CD4-positive, alpha-beta T cell (primary cell): ENCODE measurements at regions of chr12 and their contacts with region 1.

Region 1: GRCh38 chr12:46153268-46153872 is 115.5 kb downstream of the SLC38A1 start:
- DNase-seq: peak in 3 of 14 experiments; percentile 51 to 58 (median 57)
- ATAC-seq: no peak
- H3K4me3 ChIP-seq: no peak overlapping the region
- H3K4me3 Mint-ChIP-seq: no peak overlapping the region
- H3K27ac ChIP-seq: no peak overlapping the region
- H3K27ac Mint-ChIP-seq: no peak overlapping the region
- H3K4me1 ChIP-seq: no peaks in the 10 kb centered on the region
- H3K4me1 Mint-ChIP-seq: peaks cover 18% of the 10 kb centered on the region
- H3K27me3 ChIP-seq: no peaks in the 10 kb centered on the region
- H3K27me3 Mint-ChIP-seq: peaks cover 10% of the 10 kb centered on the region
- CTCF ChIP-seq: peak; percentile 90

Region 2: GRCh38 chr12:45863332-45863731 is 290.0 kb before region 1 on chr12:
- CTCF ChIA-PET with region 1: no interaction called
- POLR2A ChIA-PET with region 1: no interaction called
- intact Hi-C with region 1: no loop called
- DNase-seq: no peak
- ATAC-seq: no peak
- H3K4me3 ChIP-seq: no peak overlapping the region
- H3K4me3 Mint-ChIP-seq: no peak overlapping the region
- H3K27ac ChIP-seq: no peak overlapping the region
- H3K27ac Mint-ChIP-seq: no peak overlapping the region
- H3K4me1 ChIP-seq: no peaks in the 10 kb centered on the region
- H3K4me1 Mint-ChIP-seq: peaks cover 12% of the 10 kb centered on the region
- H3K27me3 ChIP-seq: no peaks in the 10 kb centered on the region
- H3K27me3 Mint-ChIP-seq: no peaks in the 10 kb centered on the region
- CTCF ChIP-seq: no peak

Region 3: GRCh38 chr12:46209914-46210872 is 56.8 kb after region 1 on chr12:
- CTCF ChIA-PET with region 1: no interaction called
- POLR2A ChIA-PET with region 1: no interaction called
- intact Hi-C with region 1: loop called in 1 of 2 experiments (anchors 5 kb)
- DNase-seq: peak in 13 of 14 experiments; percentile 30 to 82 (median 60)
- ATAC-seq: peak; percentile 68
- H3K4me3 ChIP-seq: no peak overlapping the region
- H3K4me3 Mint-ChIP-seq: peak overlapping the region; percentile 36
- H3K27ac ChIP-seq: peak overlapping the region; percentile 69 to 82
- H3K27ac Mint-ChIP-seq: peak overlapping the region; percentile 96
- H3K4me1 ChIP-seq: peaks cover 45% of the 10 kb centered on the region
- H3K4me1 Mint-ChIP-seq: peaks cover 99% of the 10 kb centered on the region
- H3K27me3 ChIP-seq: no peaks in the 10 kb centered on the region
- H3K27me3 Mint-ChIP-seq: no peaks in the 10 kb centered on the region
- CTCF ChIP-seq: no peak

Region 4: GRCh38 chr12:46303039-46303666 is 149.8 kb after region 1 on chr12:
- CTCF ChIA-PET with region 1: interaction called, 6 read pairs
- POLR2A ChIA-PET with region 1: no interaction called
- intact Hi-C with region 1: loop called (anchors 1 kb)
- DNase-seq: peak; percentile 15 to 86 (median 44)
- ATAC-seq: peak; percentile 89
- H3K4me3 ChIP-seq: no peak overlapping the region
- H3K4me3 Mint-ChIP-seq: no peak overlapping the region
- H3K27ac ChIP-seq: no peak overlapping the region
- H3K27ac Mint-ChIP-seq: no peak overlapping the region
- H3K4me1 ChIP-seq: no peaks in the 10 kb centered on the region
- H3K4me1 Mint-ChIP-seq: peaks cover 18% of the 10 kb centered on the region
- H3K27me3 ChIP-seq: no peaks in the 10 kb centered on the region
- H3K27me3 Mint-ChIP-seq: no peaks in the 10 kb centered on the region
- CTCF ChIP-seq: peak; percentile 96

Region 5: DNA sequence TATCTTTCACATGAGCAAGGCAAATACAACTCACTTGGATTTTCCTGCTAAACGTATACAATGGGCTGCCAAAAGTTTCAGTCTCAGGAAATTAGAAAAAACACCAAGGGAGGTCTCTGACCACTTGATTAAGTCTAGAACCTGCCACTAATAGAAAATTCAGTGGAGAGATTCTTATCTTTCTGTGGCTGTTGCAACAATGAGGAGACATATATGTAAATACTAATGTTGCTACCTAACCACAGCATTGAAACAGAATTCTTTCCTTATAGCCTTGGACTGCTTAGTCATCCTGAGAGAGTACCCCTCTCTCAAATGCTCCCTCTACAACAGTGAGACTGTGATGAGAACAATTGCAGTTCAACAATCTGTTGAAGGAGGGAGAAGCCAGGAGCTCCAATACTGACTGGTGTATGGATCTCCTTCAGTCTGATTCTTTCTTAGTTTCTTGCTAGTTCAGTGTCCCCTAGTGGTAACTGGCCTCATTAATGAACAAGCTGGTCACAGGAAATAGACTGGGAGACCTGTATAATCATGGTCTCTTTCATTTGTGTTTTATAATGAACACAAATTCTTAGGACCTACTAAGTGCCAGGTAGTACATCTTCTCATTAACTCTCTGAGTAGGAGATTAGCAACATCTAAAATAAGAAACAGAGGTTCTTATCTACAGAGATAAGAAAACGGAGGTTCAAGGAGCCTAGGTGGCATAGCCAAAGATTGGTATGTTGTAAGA is 507.9 kb after region 1 on chr12:
- CTCF ChIA-PET with region 1: interaction called, 3 read pairs
- POLR2A ChIA-PET with region 1: no interaction called
- intact Hi-C with region 1: loop called (anchors 1 to 5 kb)
- DNase-seq: peak in 4 of 14 experiments; percentile 19 to 72 (median 70)
- ATAC-seq: peak; percentile 88
- H3K4me3 ChIP-seq: no peak overlapping the region
- H3K4me3 Mint-ChIP-seq: no peak overlapping the region
- H3K27ac ChIP-seq: no peak overlapping the region
- H3K27ac Mint-ChIP-seq: no peak overlapping the region
- H3K4me1 ChIP-seq: no peaks in the 10 kb centered on the region
- H3K4me1 Mint-ChIP-seq: peaks cover 32% of the 10 kb centered on the region
- H3K27me3 ChIP-seq: no peaks in the 10 kb centered on the region
- H3K27me3 Mint-ChIP-seq: no peaks in the 10 kb centered on the region
- CTCF ChIP-seq: peak; percentile 65

Region 6: DNA sequence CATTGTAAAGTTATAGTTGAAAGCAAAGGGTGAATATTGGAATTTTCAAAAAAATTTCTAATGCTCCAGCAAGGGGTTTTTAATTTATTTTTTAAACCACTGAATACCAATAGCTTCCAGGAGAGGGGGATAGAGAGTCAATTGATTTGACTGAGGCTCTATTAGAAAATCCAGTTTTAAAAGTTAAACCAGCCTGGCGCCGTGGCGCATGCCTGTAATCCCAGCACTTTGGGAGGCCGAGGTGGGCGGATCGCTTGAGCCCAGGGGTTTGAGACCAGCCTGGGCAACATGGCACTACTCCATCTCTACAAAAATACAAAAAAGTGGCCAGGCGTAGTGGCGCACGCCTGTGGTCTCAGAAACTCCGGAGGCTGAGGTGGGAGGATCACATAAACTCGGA is 522.4 kb after region 1 on chr12:
- CTCF ChIA-PET with region 1: no interaction called
- POLR2A ChIA-PET with region 1: no interaction called
- intact Hi-C with region 1: loop called (anchors 5 kb)
- DNase-seq: peak in 3 of 14 experiments; percentile 28 to 40 (median 36)
- ATAC-seq: no peak
- H3K4me3 ChIP-seq: no peak overlapping the region
- H3K4me3 Mint-ChIP-seq: no peak overlapping the region
- H3K27ac ChIP-seq: no peak overlapping the region
- H3K27ac Mint-ChIP-seq: no peak overlapping the region
- H3K4me1 ChIP-seq: no peaks in the 10 kb centered on the region
- H3K4me1 Mint-ChIP-seq: no peaks in the 10 kb centered on the region
- H3K27me3 ChIP-seq: no peaks in the 10 kb centered on the region
- H3K27me3 Mint-ChIP-seq: no peaks in the 10 kb centered on the region
- CTCF ChIP-seq: peak; percentile 59

Region 7: DNA sequence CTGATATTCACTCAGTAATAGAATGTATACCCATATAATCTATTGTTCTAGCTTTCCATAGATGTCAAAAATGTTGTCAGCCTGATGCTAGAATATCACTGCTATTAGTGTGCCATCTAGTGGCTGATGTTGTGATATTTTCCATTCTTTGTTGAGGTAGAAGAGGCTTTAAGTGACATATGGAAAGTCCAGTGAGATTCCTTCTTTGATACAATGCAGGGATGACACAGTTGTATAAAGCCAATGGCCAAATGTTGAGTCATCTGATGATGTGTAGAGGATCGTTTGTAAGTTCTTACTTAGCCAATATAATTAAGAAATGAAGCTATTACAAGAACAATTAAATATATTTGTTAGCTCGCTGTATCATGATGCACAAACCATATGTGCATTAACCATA is 867.9 kb after region 1 on chr12:
- CTCF ChIA-PET with region 1: no interaction called
- POLR2A ChIA-PET with region 1: no interaction called
- intact Hi-C with region 1: loop called in 1 of 2 experiments (anchors 2 kb)
- DNase-seq: peak in 3 of 14 experiments; percentile 57 to 72 (median 67)
- ATAC-seq: peak; percentile 39
- H3K4me3 ChIP-seq: no peak overlapping the region
- H3K4me3 Mint-ChIP-seq: no peak overlapping the region
- H3K27ac ChIP-seq: no peak overlapping the region
- H3K27ac Mint-ChIP-seq: no peak overlapping the region
- H3K4me1 ChIP-seq: no peaks in the 10 kb centered on the region
- H3K4me1 Mint-ChIP-seq: no peaks in the 10 kb centered on the region
- H3K27me3 ChIP-seq: no peaks in the 10 kb centered on the region
- H3K27me3 Mint-ChIP-seq: peaks cover 20% of the 10 kb centered on the region
- CTCF ChIP-seq: peak; percentile 83

Region 8: GRCh38 chr12:47686645-47687240 is 1533.4 kb after region 1 on chr12:
- CTCF ChIA-PET with region 1: no interaction called
- POLR2A ChIA-PET with region 1: no interaction called
- intact Hi-C with region 1: loop called in 1 of 2 experiments (anchors 5 kb)
- DNase-seq: peak in 6 of 14 experiments; percentile 1 to 61 (median 31)
- ATAC-seq: peak; percentile 76
- H3K4me3 ChIP-seq: no peak overlapping the region
- H3K4me3 Mint-ChIP-seq: no peak overlapping the region
- H3K27ac ChIP-seq: no peak overlapping the region
- H3K27ac Mint-ChIP-seq: no peak overlapping the region
- H3K4me1 ChIP-seq: no peaks in the 10 kb centered on the region
- H3K4me1 Mint-ChIP-seq: peaks cover 10% of the 10 kb centered on the region
- H3K27me3 ChIP-seq: no peaks in the 10 kb centered on the region
- H3K27me3 Mint-ChIP-seq: no peaks in the 10 kb centered on the region
- CTCF ChIP-seq: peak; percentile 58